ENCODE measurements at regions of chr14 and their contacts with region 1.

Region 1: GRCh38 chr14:99626041-99626648 is 18.8 kb upstream of the HHIPL1 start:
- DNase-seq: peak in 1 of 2 donors; percentile 32
- H3K4me3 ChIP-seq: no peak overlapping the region
- H3K27ac ChIP-seq: peak overlapping the region in 1 of 2 donors; percentile 18
- H3K4me1 ChIP-seq: no peaks in the 10 kb centered on the region
- H3K27me3 ChIP-seq: no peaks in the 10 kb centered on the region
- CTCF ChIP-seq: no peak
- POLR2A ChIP-seq: no peak

Region 2: DNA sequence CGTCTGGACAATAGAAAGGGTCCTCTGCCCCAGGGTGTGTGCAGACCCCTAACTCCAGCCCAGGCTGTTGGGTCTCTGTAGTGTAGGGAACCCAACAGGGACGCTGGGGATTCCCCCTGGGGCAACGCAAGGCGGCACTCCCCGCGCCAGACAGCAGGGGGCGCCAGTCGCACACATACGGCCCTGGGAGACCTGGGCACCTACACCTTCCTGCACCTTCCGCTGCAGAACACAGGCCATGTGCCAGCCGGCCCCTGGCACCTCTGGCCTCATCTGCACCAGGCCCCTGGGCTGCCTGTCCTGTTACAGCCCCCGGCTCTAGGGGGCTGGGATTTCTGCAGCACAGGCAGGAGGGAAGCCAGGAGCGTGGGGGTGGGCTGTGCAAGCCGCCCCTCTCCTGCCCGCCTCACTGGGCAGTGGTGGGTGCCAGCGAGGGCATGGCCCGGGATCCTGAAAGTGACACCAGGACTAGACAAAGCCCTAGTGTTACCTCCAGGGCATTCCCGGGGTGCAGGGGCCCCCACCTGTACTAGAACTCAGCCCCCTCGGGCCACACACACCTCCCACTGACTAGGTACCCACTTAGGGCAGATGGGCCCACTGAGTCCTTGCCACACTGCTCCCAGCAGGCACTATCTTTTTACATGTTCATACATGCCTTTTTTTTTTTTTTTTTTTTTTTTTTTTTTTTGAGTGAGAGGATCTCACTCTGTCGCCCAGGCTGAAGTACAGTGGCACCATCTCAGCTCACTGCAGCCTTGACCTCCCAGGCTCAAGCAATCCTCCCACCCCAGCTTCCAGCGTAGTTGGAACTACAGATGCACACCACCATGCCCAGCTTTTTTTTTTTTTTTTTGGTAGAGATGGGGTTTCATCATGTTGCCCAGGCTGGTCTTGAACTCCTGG is 107.5 kb before region 1 on chr14:
- intact Hi-C with region 1: loop called (anchors 2 kb)
- DNase-seq: peak; percentile 69 to 84
- H3K4me3 ChIP-seq: no peak overlapping the region
- H3K27ac ChIP-seq: no peak overlapping the region
- H3K4me1 ChIP-seq: peaks cover 0 to 3% of the 10 kb centered on the region in 2 donors
- H3K27me3 ChIP-seq: no peaks in the 10 kb centered on the region
- CTCF ChIP-seq: peak; percentile 90 to 97 (median 96)
- POLR2A ChIP-seq: no peak

Measured in breast epithelium (tissue), 4 donors.